ENCODE measurements at regions of chr7 and their contacts with region 1.

Region 1: DNA sequence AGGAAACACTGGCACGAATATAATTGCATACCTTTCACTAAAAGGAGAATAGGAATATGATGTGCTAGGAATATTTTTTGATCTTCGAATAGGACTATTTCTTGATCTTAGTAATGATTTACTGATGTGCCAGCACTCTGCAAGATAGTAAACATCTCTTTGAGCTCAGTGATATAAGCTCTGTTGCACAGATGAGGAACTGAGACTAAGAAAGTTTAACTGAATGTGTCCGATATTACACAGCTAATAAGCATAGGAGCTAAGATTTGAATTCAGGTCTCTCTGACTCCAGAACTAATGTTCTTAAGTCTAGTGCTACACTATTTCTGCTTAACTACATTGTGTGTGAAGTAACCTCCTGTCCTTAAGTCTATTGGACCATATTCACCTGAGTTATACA is 98.4 kb upstream of the PTPRZ1 start:
- DNase-seq: no peak

Region 2: GRCh38 chr7:121824276-121824675 is 49.7 kb after region 1 on chr7:
- intact Hi-C with region 1: loop called in 1 of 2 experiments (anchors 1 kb)
- DNase-seq: no peak